CD4-positive, alpha-beta memory T cell (primary cell): ENCODE measurements at regions of chr1 and their contacts with region 1.

Region 1: GRCh38 chr1:111481387-111482221 is 7.8 kb downstream of the C1orf162 start:
- DNase-seq: peak in 4 of 5 donors; percentile 41 to 54 (median 52)
- H3K4me3 ChIP-seq: no peak overlapping the region
- H3K4me3 Mint-ChIP-seq: no peak overlapping the region
- H3K27ac ChIP-seq: no peak overlapping the region
- H3K27ac Mint-ChIP-seq: peak overlapping the region in 3 of 7 donors; percentile 11 to 80 (median 47)
- H3K4me1 ChIP-seq: peaks cover 29% of the 10 kb centered on the region
- H3K4me1 Mint-ChIP-seq: peaks cover 31 to 55% (median 44%) of the 10 kb centered on the region in 4 donors
- H3K27me3 ChIP-seq: no peaks in the 10 kb centered on the region
- H3K27me3 Mint-ChIP-seq: no peaks in the 10 kb centered on the region

Region 2: GRCh38 chr1:111463029-111463683 is 18.4 kb before region 1 on chr1:
- CTCF ChIA-PET with region 1: interaction called, 6 read pairs
- POLR2A ChIA-PET with region 1: interaction called, 16 read pairs
- intact Hi-C with region 1: no loop called
- DNase-seq: no peak
- H3K4me3 ChIP-seq: no peak overlapping the region
- H3K4me3 Mint-ChIP-seq: no peak overlapping the region
- H3K27ac ChIP-seq: no peak overlapping the region
- H3K27ac Mint-ChIP-seq: peak overlapping the region in 4 of 7 donors; percentile 22 to 68 (median 36)
- H3K4me1 ChIP-seq: peaks cover 3% of the 10 kb centered on the region
- H3K4me1 Mint-ChIP-seq: peaks cover 8 to 26% (median 19%) of the 10 kb centered on the region in 4 donors
- H3K27me3 ChIP-seq: no peaks in the 10 kb centered on the region
- H3K27me3 Mint-ChIP-seq: no peaks in the 10 kb centered on the region

Region 3: DNA sequence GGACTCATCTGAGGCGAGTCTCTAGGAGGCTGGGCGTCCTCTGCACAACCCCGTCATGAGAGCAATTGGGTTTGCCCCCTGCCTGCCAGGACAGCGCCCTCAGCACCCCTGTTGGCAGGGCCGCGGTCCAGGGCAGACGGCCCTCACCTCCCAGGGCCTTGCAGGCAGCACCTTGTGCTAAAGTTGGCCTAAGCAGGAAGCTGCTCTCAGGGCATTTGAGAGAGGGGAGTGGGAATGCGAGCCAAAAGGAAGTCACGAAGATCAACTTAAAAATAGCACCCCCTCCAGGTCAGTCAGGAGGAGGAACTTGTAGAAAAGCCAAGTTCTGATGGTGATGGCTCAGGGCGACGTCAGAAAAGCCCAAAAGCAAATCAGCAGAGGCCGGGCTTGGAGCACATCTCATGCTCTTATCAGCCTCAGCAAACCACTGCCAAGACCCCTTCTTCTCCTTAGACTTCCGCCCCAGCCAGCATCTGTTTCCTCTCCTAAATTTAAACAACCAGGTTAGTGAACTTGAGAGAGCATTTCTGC is 34.5 kb after region 1 on chr1:
- CTCF ChIA-PET with region 1: interaction called, 14 read pairs
- POLR2A ChIA-PET with region 1: interaction called, 3 read pairs
- intact Hi-C with region 1: no loop called
- DNase-seq: peak in 4 of 5 donors; percentile 28 to 42 (median 38)
- H3K4me3 ChIP-seq: no peak overlapping the region
- H3K4me3 Mint-ChIP-seq: peak overlapping the region; percentile 49 to 84 (median 75)
- H3K27ac ChIP-seq: no peak overlapping the region
- H3K27ac Mint-ChIP-seq: peak overlapping the region; percentile 46 to 87 (median 75)
- H3K4me1 ChIP-seq: peaks cover 66% of the 10 kb centered on the region
- H3K4me1 Mint-ChIP-seq: peaks cover 28 to 47% (median 36%) of the 10 kb centered on the region in 4 donors
- H3K27me3 ChIP-seq: no peaks in the 10 kb centered on the region
- H3K27me3 Mint-ChIP-seq: no peaks in the 10 kb centered on the region

Region 4: GRCh38 chr1:111709986-111710385 is 228.4 kb after region 1 on chr1:
- CTCF ChIA-PET with region 1: interaction called, 8 read pairs
- POLR2A ChIA-PET with region 1: no interaction called
- intact Hi-C with region 1: loop called (anchors 5 kb)
- DNase-seq: no peak
- H3K4me3 ChIP-seq: no peak overlapping the region
- H3K4me3 Mint-ChIP-seq: no peak overlapping the region
- H3K27ac ChIP-seq: no peak overlapping the region
- H3K27ac Mint-ChIP-seq: peak overlapping the region in 6 of 7 donors; percentile 0 to 58 (median 13)
- H3K4me1 ChIP-seq: peaks cover 3% of the 10 kb centered on the region
- H3K4me1 Mint-ChIP-seq: peaks cover 0 to 7% (median 5%) of the 10 kb centered on the region in 4 donors
- H3K27me3 ChIP-seq: no peaks in the 10 kb centered on the region
- H3K27me3 Mint-ChIP-seq: no peaks in the 10 kb centered on the region

Region 5: DNA sequence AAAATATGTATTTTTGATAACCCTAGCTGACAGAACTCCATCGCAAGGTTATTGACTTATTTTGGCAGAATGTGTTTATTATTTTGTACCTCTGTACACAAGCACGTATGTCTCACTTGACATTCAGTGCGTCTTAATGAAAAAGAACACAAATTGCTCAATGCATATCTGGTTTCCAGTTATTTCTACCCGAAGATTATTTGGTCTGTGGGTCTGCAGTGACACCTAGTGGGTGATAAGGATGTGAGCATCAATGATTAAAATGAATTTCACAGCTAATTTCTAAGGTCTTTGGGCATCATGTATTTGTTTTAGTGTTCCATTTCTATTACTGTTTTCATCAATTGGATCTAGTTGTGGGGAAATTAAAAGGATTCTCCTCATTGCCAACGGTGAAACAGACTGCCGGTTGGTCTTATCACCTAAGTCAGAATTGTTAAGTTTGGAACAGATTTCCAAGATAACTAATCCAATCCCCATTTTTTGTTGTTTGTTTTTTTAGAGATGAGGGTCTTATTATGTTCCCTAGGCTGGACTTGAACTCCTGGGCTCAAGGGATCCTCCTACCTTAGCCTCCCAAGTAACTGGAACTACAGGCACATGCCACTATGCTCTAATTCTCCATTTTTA is 288.0 kb after region 1 on chr1:
- CTCF ChIA-PET with region 1: interaction called, 6 read pairs
- POLR2A ChIA-PET with region 1: interaction called, 7 read pairs
- intact Hi-C with region 1: loop called (anchors 1 kb)
- DNase-seq: peak; percentile 54 to 64 (median 59)
- H3K4me3 ChIP-seq: no peak overlapping the region
- H3K4me3 Mint-ChIP-seq: no peak overlapping the region
- H3K27ac ChIP-seq: no peak overlapping the region
- H3K27ac Mint-ChIP-seq: peak overlapping the region in 5 of 7 donors; percentile 7 to 55 (median 38)
- H3K4me1 ChIP-seq: no peaks in the 10 kb centered on the region
- H3K4me1 Mint-ChIP-seq: peaks cover 0 to 3% (median under 1%) of the 10 kb centered on the region in 4 donors
- H3K27me3 ChIP-seq: no peaks in the 10 kb centered on the region
- H3K27me3 Mint-ChIP-seq: no peaks in the 10 kb centered on the region